Body of pancreas (tissue), 4 donors: ENCODE measurements at regions of chr19 and their contacts with region 1.

Region 1: GRCh38 chr19:2474232-2475017 is 1.5 kb upstream of the GADD45B start:
- DNase-seq: peak; percentile 84 to 87 (median 86)
- ATAC-seq: peak; percentile 52
- H3K4me3 ChIP-seq: no peak overlapping the region
- H3K27ac ChIP-seq: peak overlapping the region; percentile 76 to 94 (median 91)
- H3K4me1 ChIP-seq: peaks cover 36% of the 10 kb centered on the region
- H3K27me3 ChIP-seq: no peaks in the 10 kb centered on the region
- CTCF ChIP-seq: peak; percentile 91 to 99 (median 97)
- POLR2A ChIP-seq: peak in 1 of 3 donors; percentile 27

Region 2: GRCh38 chr19:2579678-2580280 is 105.4 kb after region 1 on chr19:
- intact Hi-C with region 1: loop called (anchors 5 kb)
- DNase-seq: no peak
- ATAC-seq: no peak
- H3K4me3 ChIP-seq: no peak overlapping the region
- H3K27ac ChIP-seq: peak overlapping the region; percentile 69 to 85 (median 80)
- H3K4me1 ChIP-seq: peaks cover 35% of the 10 kb centered on the region
- H3K27me3 ChIP-seq: no peaks in the 10 kb centered on the region
- CTCF ChIP-seq: peak in 1 of 7 experiments; percentile 14
- POLR2A ChIP-seq: no peak

Region 3: DNA sequence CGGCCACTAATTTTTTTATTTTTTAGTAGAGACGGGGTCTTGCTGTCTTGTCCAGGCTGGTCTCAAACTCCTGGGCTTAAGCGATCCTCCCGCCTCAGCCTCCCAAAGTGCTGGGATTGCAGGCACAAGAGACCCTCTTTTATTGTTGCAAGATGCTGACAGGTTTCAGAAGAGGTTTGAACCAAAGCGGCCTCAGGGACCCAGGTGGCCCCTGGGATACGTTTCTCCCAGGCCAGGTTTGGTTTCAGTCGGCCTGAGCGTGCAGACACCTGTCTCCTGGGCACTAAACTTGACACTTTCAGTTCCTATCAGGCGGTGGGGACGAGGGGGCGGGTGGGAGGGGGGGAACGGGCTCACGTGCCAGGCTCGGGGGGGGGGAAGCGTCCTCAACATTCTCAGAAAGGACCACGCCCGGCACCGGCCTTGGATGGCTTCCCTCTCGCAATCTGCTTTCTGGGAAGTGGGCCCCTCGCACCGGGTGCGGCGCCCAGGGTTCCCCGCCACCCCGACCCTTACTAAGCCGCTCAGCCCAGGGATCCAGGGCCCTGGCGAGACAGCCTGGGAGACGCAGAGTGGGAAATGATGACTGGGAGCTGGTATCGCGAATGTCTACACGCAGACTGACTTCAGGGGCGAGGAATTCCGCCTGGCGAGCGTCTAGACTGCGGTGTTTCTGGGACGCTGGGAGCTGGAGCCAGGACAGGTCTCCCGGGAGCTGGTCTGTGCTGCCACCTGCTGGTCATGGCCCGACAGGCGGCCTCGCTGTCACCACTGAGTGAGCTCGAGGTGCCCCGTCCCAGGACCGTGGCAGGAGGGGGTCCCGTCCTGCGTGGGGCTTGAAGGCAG is 136.4 kb after region 1 on chr19:
- intact Hi-C with region 1: loop called (anchors 5 kb)
- DNase-seq: peak; percentile 96 to 97 (median 97)
- ATAC-seq: peak; percentile 95
- H3K4me3 ChIP-seq: no peak overlapping the region
- H3K27ac ChIP-seq: peak overlapping the region; percentile 95 to 99 (median 96)
- H3K4me1 ChIP-seq: peaks cover 17% of the 10 kb centered on the region
- H3K27me3 ChIP-seq: no peaks in the 10 kb centered on the region
- CTCF ChIP-seq: peak; percentile 95 to 98 (median 97)
- POLR2A ChIP-seq: peak; percentile 53 to 86 (median 71)